CD4-positive, alpha-beta T cell (primary cell): ENCODE measurements at regions of chr1 and their contacts with region 1.

Region 1: DNA sequence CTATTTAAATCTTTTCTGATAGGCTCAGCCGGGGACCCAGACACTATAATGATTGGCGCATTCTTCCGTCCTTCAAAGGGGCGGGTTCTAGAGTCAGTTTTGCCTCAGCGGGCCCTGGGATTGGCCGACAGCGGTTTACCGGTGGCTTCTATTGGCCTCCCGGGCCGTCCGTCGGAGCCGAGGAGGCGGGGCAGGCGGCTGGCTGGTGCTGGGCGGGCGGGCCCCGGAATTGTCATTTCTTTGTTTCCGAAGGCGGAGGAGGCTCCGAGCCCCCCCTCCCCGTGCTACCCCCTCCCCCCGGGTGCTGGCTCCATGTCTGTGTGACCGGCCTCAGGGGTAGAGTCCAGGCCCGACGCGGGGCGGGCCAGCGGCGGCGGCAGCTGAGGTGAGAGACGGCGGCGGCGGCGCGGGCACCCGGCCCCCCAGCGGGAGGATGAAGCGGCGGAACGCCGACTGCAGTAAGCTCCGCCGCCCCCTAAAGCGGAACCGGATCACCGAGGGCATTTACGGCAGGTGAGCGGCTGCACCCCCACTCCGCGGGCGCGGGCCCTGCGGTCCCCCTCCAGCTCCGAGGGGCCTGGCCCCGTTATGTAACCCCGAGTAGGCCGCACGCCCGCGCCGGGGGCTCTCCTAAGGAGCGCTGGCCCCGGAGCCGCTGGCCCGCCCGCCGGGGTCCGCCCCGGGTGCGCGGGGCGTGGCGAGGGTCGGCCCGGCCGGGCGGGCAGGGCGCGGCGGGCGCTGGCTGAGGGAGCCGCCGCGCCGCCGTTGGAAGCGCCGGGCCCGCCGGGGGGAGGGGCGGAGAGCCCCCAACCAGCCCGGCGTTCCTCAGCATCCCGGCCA is at the start of gene MACO1:
- DNase-seq: peak; percentile 93 to 98 (median 96)
- ATAC-seq: peak; percentile 82
- H3K4me3 ChIP-seq: peak within 1 kb of the TSS; percentile 83
- H3K4me3 Mint-ChIP-seq: peak within 1 kb of the TSS; percentile 92
- H3K27ac ChIP-seq: peak within 1 kb of the TSS; percentile 96 to 97
- H3K27ac Mint-ChIP-seq: peak within 1 kb of the TSS; percentile 100
- H3K4me1 ChIP-seq: peaks cover 9% of the 10 kb centered on the region
- H3K4me1 Mint-ChIP-seq: peaks cover 58% of the 10 kb centered on the region
- H3K27me3 ChIP-seq: no peaks in the 10 kb centered on the region
- H3K27me3 Mint-ChIP-seq: no peaks in the 10 kb centered on the region
- CTCF ChIP-seq: no peak
- total RNA-seq, gene MACO1: 24.1 to 24.9 TPM

Region 2: DNA sequence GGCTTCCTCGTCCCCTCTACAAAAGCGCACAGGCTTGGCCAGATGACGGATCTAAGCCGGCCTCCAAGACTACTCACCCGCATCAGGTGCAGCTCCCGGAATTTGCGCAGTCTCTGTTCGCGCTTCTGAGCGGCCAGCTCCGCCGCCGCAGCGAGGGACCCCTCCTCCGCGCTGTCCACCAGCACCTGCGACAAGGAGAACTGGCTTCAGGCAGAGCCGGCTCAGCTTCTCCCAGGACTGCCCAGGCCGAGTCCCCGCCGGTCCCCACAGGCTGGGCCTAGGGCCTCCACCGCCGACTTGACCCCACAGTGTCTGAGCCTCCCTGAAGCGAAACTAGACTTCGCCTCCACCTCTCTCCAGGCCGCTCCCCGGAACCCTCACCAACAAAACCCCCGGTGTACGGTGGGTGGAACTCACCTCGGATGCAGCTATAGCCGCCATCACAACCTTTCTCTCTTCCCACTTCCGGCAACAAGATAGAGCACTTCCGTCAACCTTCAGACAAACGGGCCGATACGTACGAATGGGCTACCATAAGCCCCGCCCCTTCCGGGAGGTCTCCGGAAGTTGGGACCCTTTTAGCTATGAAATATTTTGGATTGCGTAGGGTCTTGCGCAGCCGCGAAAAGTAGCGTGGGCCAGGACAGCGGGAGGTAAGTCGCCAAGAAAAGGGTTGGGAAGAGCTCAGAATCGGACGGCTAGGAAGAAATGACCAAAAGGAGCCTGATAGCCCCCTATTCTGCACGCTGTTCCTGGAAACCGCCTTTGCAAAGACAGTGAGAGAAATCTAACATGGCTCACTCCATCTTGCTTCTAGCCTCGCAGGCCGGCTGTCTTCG is 198.6 kb before region 1 on chr1 and contains the start of gene SYF2:
- CTCF ChIA-PET with region 1: no interaction called
- POLR2A ChIA-PET with region 1: interaction called, 12 read pairs
- intact Hi-C with region 1: no loop called
- DNase-seq: peak; percentile 76 to 96 (median 86)
- ATAC-seq: peak; percentile 90
- H3K4me3 ChIP-seq: peak within 1 kb of the TSS; percentile 65
- H3K4me3 Mint-ChIP-seq: no peak within 1 kb of the TSS
- H3K27ac ChIP-seq: peak within 1 kb of the TSS; percentile 85 to 93
- H3K27ac Mint-ChIP-seq: no peak within 1 kb of the TSS
- H3K4me1 ChIP-seq: peaks cover 30% of the 10 kb centered on the region
- H3K4me1 Mint-ChIP-seq: peaks cover 27% of the 10 kb centered on the region
- H3K27me3 ChIP-seq: no peaks in the 10 kb centered on the region
- H3K27me3 Mint-ChIP-seq: no peaks in the 10 kb centered on the region
- CTCF ChIP-seq: no peak
- total RNA-seq, gene SYF2: 93.3 to 98.9 TPM

Region 3: GRCh38 chr1:25247024-25247828 is 183.7 kb before region 1 on chr1 and contains the start of gene RSRP1:
- CTCF ChIA-PET with region 1: no interaction called
- POLR2A ChIA-PET with region 1: interaction called, 15 read pairs
- intact Hi-C with region 1: no loop called
- DNase-seq: peak; percentile 99 to 100 (median 100)
- ATAC-seq: peak; percentile 84
- H3K4me3 ChIP-seq: peak within 1 kb of the TSS; percentile 97
- H3K4me3 Mint-ChIP-seq: peak within 1 kb of the TSS; percentile 97
- H3K27ac ChIP-seq: peak within 1 kb of the TSS; percentile 98 to 99
- H3K27ac Mint-ChIP-seq: peak within 1 kb of the TSS; percentile 99
- H3K4me1 ChIP-seq: peaks cover 29% of the 10 kb centered on the region
- H3K4me1 Mint-ChIP-seq: peaks cover 60% of the 10 kb centered on the region
- H3K27me3 ChIP-seq: no peaks in the 10 kb centered on the region
- H3K27me3 Mint-ChIP-seq: peaks cover 5% of the 10 kb centered on the region
- CTCF ChIP-seq: no peak
- total RNA-seq, gene RSRP1: 395 to 428 TPM

Region 4: DNA sequence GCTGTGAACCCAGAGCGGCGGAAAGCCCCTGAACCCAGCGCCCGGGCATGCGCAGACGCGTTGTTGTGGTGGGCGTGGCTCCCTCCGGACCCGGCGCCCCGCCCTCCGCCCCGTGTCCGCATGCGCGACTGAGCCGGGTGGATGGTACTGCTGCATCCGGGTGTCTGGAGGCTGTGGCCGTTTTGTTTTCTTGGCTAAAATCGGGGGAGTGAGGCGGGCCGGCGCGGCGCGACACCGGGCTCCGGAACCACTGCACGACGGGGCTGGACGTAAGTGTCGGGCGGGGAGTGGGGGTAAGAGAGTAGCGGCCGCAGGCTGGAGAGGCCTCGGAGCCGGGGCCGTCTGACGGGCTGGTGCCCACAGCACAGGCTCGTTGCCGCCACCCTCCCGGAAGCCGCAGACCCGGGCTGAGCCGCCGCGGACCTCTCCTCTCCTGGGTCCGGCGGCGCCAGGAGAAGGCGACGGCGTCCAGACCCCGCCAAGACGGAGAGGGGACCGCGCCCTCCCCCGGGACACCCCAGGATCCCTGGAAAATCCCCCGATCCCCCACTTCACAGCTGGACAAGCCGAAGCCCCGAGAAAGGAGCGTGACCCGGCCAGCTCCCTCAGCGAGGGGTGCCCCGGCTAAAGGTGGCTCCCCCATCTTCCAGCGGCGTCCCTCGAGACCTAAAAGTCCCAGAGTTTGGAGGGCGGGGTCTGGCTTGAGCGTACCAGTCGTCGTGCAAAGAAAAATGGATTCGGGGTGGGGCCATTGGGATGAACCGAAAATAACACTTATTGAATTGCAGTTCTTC is 92.5 kb before region 1 on chr1 and contains the start of gene TMEM50A:
- CTCF ChIA-PET with region 1: no interaction called
- POLR2A ChIA-PET with region 1: no interaction called
- intact Hi-C with region 1: loop called (anchors 5 to 10 kb)
- DNase-seq: peak; percentile 82 to 93 (median 89)
- ATAC-seq: peak; percentile 69
- H3K4me3 ChIP-seq: peak within 1 kb of the TSS; percentile 69
- H3K4me3 Mint-ChIP-seq: peak within 1 kb of the TSS; percentile 98
- H3K27ac ChIP-seq: peak within 1 kb of the TSS; percentile 83 to 97
- H3K27ac Mint-ChIP-seq: peak within 1 kb of the TSS; percentile 81
- H3K4me1 ChIP-seq: peaks cover 12% of the 10 kb centered on the region
- H3K4me1 Mint-ChIP-seq: peaks cover 39% of the 10 kb centered on the region
- H3K27me3 ChIP-seq: no peaks in the 10 kb centered on the region
- H3K27me3 Mint-ChIP-seq: no peaks in the 10 kb centered on the region
- CTCF ChIP-seq: no peak
- total RNA-seq, gene TMEM50A: 82.6 to 83.1 TPM

Region 5: DNA sequence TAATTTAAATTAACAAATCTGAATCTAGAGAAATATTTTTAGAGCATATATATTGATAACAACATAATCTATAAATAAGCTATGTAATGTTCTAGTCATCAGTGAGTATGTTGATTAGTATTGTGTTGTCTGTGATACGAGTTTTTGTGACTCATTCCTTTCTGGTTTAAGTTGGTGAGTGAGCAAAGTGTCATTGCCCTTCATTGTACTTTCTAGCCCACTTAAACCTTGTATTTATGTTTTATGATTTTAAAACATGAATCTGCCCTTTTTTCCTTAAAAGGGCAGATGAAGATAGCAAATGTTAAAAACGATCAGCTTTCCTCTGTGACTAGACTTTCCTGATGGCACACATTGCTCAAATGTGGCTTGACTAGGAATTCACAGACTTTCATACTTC is 38.3 kb after region 1 on chr1:
- CTCF ChIA-PET with region 1: interaction called, 4 read pairs
- POLR2A ChIA-PET with region 1: interaction called, 11 read pairs
- intact Hi-C with region 1: loop called (anchors 5 kb)
- DNase-seq: no peak
- ATAC-seq: no peak
- H3K4me3 ChIP-seq: no peak overlapping the region
- H3K4me3 Mint-ChIP-seq: no peak overlapping the region
- H3K27ac ChIP-seq: no peak overlapping the region
- H3K27ac Mint-ChIP-seq: no peak overlapping the region
- H3K4me1 ChIP-seq: peaks cover 11% of the 10 kb centered on the region
- H3K4me1 Mint-ChIP-seq: peaks cover 61% of the 10 kb centered on the region
- H3K27me3 ChIP-seq: no peaks in the 10 kb centered on the region
- H3K27me3 Mint-ChIP-seq: no peaks in the 10 kb centered on the region
- CTCF ChIP-seq: no peak

Region 6: DNA sequence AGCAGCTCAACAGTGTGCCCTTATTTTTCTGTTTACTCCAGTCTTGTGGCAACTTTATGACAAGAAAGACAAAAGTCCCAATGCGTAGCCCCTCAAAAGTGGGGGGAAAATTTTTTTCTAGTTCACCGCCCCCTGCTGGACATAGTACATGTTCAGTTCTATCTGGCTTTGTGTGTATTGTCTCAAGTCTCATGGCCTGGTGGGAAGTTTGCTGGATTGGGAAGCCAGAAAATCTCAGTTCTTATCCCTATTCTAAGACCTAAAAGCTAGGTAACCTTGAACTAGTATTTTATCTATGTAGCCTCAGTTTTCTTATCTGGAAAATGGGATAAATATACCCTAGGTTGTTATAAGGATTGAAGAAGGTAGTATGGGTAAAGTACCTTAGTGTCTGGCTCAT is 56.7 kb after region 1 on chr1:
- CTCF ChIA-PET with region 1: interaction called, 4 read pairs
- POLR2A ChIA-PET with region 1: no interaction called
- intact Hi-C with region 1: loop called in 1 of 2 experiments (anchors 5 kb)
- DNase-seq: peak in 11 of 14 experiments; percentile 16 to 60 (median 25)
- ATAC-seq: no peak
- H3K4me3 ChIP-seq: no peak overlapping the region
- H3K4me3 Mint-ChIP-seq: no peak overlapping the region
- H3K27ac ChIP-seq: no peak overlapping the region
- H3K27ac Mint-ChIP-seq: no peak overlapping the region
- H3K4me1 ChIP-seq: no peaks in the 10 kb centered on the region
- H3K4me1 Mint-ChIP-seq: peaks cover 17% of the 10 kb centered on the region
- H3K27me3 ChIP-seq: no peaks in the 10 kb centered on the region
- H3K27me3 Mint-ChIP-seq: no peaks in the 10 kb centered on the region
- CTCF ChIP-seq: peak; percentile 74

Region 7: DNA sequence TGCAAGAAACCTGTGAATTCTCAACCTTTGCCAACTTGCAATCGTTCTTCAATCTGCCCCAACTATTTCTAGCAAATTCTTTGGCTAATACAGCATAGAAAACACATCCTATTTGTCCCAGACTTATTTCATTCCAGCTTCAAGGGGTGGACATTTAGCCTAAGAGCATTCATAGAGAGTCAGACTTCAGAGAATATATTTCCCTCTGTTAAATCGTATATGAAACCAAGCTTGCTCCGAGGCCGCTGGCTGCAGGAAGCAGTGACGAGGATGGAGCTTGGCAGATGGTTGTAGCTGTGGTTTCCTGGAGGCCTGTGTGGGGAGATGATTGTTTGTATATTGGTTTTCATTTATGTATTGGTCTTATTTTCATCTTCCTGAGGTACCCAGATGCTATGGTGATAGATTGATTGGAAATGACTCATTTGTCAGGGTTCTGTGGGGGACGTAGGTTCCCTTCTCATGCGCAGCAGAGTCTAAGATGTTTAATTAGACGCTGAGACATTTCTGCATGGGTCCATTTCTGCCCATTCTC is 211.8 kb after region 1 on chr1:
- CTCF ChIA-PET with region 1: no interaction called
- POLR2A ChIA-PET with region 1: no interaction called
- intact Hi-C with region 1: no loop called
- DNase-seq: peak; percentile 55 to 90 (median 70)
- ATAC-seq: peak; percentile 89
- H3K4me3 ChIP-seq: peak overlapping the region; percentile 36
- H3K4me3 Mint-ChIP-seq: peak overlapping the region; percentile 82
- H3K27ac ChIP-seq: peak overlapping the region; percentile 68 to 72
- H3K27ac Mint-ChIP-seq: peak overlapping the region; percentile 89
- H3K4me1 ChIP-seq: peaks cover 60% of the 10 kb centered on the region
- H3K4me1 Mint-ChIP-seq: peaks cover 90% of the 10 kb centered on the region
- H3K27me3 ChIP-seq: no peaks in the 10 kb centered on the region
- H3K27me3 Mint-ChIP-seq: no peaks in the 10 kb centered on the region
- CTCF ChIP-seq: no peak

Region 8: GRCh38 chr1:26450908-26451307 is 1020.0 kb after region 1 on chr1:
- CTCF ChIA-PET with region 1: no interaction called
- POLR2A ChIA-PET with region 1: no interaction called
- intact Hi-C with region 1: no loop called
- DNase-seq: no peak
- ATAC-seq: no peak
- H3K4me3 ChIP-seq: no peak overlapping the region
- H3K4me3 Mint-ChIP-seq: no peak overlapping the region
- H3K27ac ChIP-seq: no peak overlapping the region
- H3K27ac Mint-ChIP-seq: no peak overlapping the region
- H3K4me1 ChIP-seq: no peaks in the 10 kb centered on the region
- H3K4me1 Mint-ChIP-seq: no peaks in the 10 kb centered on the region
- H3K27me3 ChIP-seq: no peaks in the 10 kb centered on the region
- H3K27me3 Mint-ChIP-seq: no peaks in the 10 kb centered on the region
- CTCF ChIP-seq: no peak